ENCODE measurements at regions of chr6 and their contacts with region 1.

Region 1: DNA sequence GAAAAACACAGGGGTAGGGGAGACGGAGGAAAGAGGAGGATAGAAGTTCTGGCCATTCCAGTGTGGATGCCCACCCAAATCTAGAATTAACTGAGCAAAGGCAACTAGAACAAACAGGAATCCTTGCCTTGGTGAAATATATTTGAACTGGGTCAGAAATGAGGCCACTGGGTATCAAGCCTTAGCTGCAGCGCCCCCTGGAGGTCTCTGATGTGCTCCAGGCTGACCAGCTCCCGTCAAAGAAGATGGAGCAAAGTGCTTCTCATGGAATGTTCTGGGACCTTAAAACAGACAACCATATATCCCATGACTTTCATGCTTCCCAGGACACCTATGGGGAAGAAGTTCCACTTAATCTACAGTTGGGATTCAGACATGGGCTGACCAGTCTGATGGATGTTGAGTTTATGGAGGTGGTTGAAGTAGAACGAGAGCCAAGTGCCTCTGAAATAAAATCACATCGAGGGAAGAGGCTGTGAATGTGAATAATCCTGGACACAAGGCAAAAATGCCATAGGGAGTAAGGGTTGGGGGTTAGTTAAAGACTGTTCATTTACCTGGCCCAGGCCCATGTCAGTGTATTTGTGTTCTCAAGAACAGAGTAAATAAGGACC is 50.4 kb downstream of the HLA-DPB1 start:
- DNase-seq: peak; percentile 28 to 73 (median 50)
- ATAC-seq: no peak
- H3K4me3 ChIP-seq: no peak overlapping the region
- H3K4me3 Mint-ChIP-seq: no peak overlapping the region
- H3K27ac ChIP-seq: no peak overlapping the region
- H3K27ac Mint-ChIP-seq: no peak overlapping the region
- H3K4me1 ChIP-seq: no peaks in the 10 kb centered on the region
- H3K4me1 Mint-ChIP-seq: no peaks in the 10 kb centered on the region
- H3K27me3 ChIP-seq: no peaks in the 10 kb centered on the region
- H3K27me3 Mint-ChIP-seq: peaks cover 28% of the 10 kb centered on the region
- CTCF ChIP-seq: peak; percentile 56

Region 2: GRCh38 chr6:33477864-33478263 is 351.7 kb after region 1 on chr6:
- CTCF ChIA-PET with region 1: no interaction called
- POLR2A ChIA-PET with region 1: no interaction called
- intact Hi-C with region 1: loop called in 1 of 2 experiments (anchors 10 kb)
- DNase-seq: no peak
- ATAC-seq: no peak
- H3K4me3 ChIP-seq: no peak overlapping the region
- H3K4me3 Mint-ChIP-seq: no peak overlapping the region
- H3K27ac ChIP-seq: no peak overlapping the region
- H3K27ac Mint-ChIP-seq: no peak overlapping the region
- H3K4me1 ChIP-seq: no peaks in the 10 kb centered on the region
- H3K4me1 Mint-ChIP-seq: no peaks in the 10 kb centered on the region
- H3K27me3 ChIP-seq: no peaks in the 10 kb centered on the region
- H3K27me3 Mint-ChIP-seq: no peaks in the 10 kb centered on the region
- CTCF ChIP-seq: no peak

Measured in CD4-positive, alpha-beta T cell (primary cell).